GM12878 (cell line): ENCODE measurements at regions of chr2 and their contacts with region 1.

Region 1: DNA sequence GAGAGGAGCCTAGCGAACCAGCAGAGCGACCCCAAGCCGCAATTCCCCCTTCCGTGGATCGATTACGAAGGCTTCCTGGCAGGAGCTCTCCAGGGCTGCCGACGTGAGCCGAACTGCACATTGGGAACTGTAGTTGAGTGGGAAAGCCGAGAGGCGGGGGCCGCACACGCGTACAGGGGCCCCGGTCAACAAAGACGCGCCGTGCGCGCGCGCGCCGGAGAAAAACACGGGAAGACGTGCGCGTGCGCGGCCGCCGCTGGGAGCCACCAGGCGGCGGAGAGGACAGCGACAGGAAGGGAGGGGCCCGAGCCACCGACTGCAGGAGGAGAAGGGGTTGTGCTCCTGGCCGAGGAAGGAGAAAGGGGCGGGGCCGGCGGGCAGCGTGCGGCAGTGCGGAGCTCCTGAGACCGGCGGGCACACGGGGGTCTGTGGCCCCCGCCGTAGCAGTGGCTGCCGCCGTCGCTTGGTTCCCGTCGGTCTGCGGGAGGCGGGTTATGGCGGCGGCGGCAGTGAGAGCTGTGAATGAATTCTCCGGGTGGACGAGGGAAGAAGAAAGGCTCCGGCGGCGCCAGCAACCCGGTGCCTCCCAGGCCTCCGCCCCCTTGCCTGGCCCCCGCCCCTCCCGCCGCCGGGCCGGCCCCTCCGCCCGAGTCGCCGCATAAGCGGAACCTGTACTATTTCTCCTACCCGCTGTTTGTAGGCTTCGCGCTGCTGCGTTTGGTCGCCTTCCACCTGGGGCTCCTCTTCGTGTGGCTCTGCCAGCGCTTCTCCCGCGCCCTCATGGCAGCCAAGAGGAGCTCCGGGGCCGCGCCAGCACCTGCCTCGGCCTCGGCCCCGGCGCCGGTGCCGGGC is at the start of gene SPAST:
- DNase-seq: peak; percentile 90
- ATAC-seq: peak; percentile 97
- H3K4me3 ChIP-seq: peak within 1 kb of the TSS; percentile 87
- H3K27ac ChIP-seq: peak within 1 kb of the TSS; percentile 87
- H3K4me1 ChIP-seq: peaks cover 11% of the 10 kb centered on the region; the same call in 1 of the 2 replicates
- H3K27me3 ChIP-seq: no peaks in the 10 kb centered on the region
- CTCF ChIP-seq: peak; percentile 31 to 48 (median 37); a peak in 5 of 6 replicates
- EP300 ChIP-seq: no peak
- POLR2A ChIP-seq: peak; percentile 78
- RAD21 ChIP-seq: peak; percentile 5; the same call in 1 of the 2 replicates
- polyA plus RNA-seq, gene SPAST: 4.3 to 8.4 TPM

Region 2: DNA sequence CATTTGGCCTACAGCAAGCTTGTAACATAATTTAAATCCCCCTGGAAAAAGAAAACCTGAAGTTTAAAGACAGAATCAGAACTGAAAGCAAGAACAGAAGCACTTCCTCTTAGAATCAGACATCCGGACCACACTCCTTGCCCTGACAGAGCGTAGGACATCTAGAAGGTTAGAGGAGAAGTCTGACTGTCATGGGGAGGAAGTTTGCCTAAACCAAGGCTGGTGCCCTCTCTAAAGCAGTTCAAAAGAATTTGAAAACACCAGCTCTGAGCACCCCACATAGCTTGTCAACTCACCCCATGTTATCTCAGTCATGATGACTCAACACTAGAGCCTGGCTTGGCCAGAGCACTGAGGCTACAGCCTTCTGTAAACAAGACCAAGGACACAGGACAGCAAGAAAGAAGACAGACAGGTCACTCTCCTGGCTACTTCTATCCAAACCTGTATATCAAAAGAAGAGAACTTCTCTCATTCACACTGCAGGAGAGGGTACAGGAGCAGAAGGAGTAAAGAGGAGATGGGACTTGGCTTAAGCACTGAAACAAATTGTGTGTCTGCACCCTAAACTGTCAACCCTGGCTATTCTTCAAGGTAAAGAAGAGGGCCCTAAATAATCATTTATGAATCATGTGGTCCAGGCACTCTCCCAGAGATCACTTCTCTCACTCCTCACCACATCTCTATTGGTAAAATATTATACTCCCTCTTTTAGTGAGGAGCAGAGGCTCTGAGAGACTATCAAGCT is 251.3 kb before region 1 on chr2:
- CTCF ChIA-PET with region 1: no interaction called
- POLR2A ChIA-PET with region 1: no interaction called
- RAD21 ChIA-PET with region 1: no interaction called
- SMC1A ChIA-PET with region 1: no interaction called
- in situ Hi-C with region 1: no loop called
- intact Hi-C with region 1: no loop called
- DNase-seq: peak; percentile 68
- ATAC-seq: peak; percentile 98
- H3K4me3 ChIP-seq: no peak overlapping the region
- H3K27ac ChIP-seq: peak overlapping the region; percentile 59; the same call in 1 of the 2 replicates
- H3K4me1 ChIP-seq: peaks cover 9% of the 10 kb centered on the region
- H3K27me3 ChIP-seq: no peaks in the 10 kb centered on the region
- CTCF ChIP-seq: no peak
- EP300 ChIP-seq: no peak
- POLR2A ChIP-seq: no peak
- RAD21 ChIP-seq: no peak

Region 3: GRCh38 chr2:31957354-31958139 is 106.0 kb before region 1 on chr2:
- CTCF ChIA-PET with region 1: no interaction called
- POLR2A ChIA-PET with region 1: interaction called, 3 read pairs
- RAD21 ChIA-PET with region 1: no interaction called
- SMC1A ChIA-PET with region 1: no interaction called
- in situ Hi-C with region 1: no loop called
- intact Hi-C with region 1: loop called (anchors 5 kb)
- DNase-seq: no peak
- ATAC-seq: peak; percentile 56
- H3K4me3 ChIP-seq: no peak overlapping the region
- H3K27ac ChIP-seq: peak overlapping the region; percentile 59
- H3K4me1 ChIP-seq: peaks cover 32% of the 10 kb centered on the region
- H3K27me3 ChIP-seq: no peaks in the 10 kb centered on the region
- CTCF ChIP-seq: no peak
- EP300 ChIP-seq: no peak
- POLR2A ChIP-seq: no peak
- RAD21 ChIP-seq: no peak

Region 4: GRCh38 chr2:32039447-32040219 is 23.9 kb before region 1 on chr2 and contains the start of gene DPY30:
- CTCF ChIA-PET with region 1: interaction called, 29 read pairs
- POLR2A ChIA-PET with region 1: interaction called, 31 read pairs
- RAD21 ChIA-PET with region 1: interaction called, 39 read pairs
- SMC1A ChIA-PET with region 1: interaction called, 9 read pairs
- in situ Hi-C with region 1: no loop called
- intact Hi-C with region 1: no loop called
- DNase-seq: peak; percentile 62
- ATAC-seq: peak; percentile 98
- H3K4me3 ChIP-seq: peak within 1 kb of the TSS; percentile 97
- H3K27ac ChIP-seq: peak within 1 kb of the TSS; percentile 67
- H3K4me1 ChIP-seq: no peaks in the 10 kb centered on the region
- H3K27me3 ChIP-seq: no peaks in the 10 kb centered on the region
- CTCF ChIP-seq: no peak
- EP300 ChIP-seq: no peak
- POLR2A ChIP-seq: peak; percentile 100
- RAD21 ChIP-seq: no peak
- polyA plus RNA-seq, gene DPY30: 287 to 307 TPM

Region 5: DNA sequence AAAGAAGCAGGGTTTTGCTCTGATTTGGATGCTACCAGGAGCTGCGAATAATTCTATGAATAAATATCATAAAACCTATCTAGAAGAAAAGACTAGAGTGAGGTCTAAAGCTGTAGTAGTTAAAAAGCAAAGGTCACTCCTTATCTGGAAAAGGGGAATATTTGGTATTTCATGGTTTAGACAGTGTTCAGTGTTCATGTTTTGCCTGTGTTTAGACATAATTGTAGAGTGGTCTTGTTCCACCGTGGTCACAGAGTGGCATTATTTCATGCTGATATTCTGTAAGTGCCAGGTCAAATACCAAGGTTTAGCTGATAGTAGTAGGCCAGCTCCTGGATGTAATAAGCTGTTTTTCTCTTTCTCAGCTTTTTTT is 10.6 kb after region 1 on chr2:
- CTCF ChIA-PET with region 1: no interaction called
- POLR2A ChIA-PET with region 1: interaction called, 3 read pairs
- RAD21 ChIA-PET with region 1: interaction called, 10 read pairs
- SMC1A ChIA-PET with region 1: interaction called, 3 read pairs
- in situ Hi-C with region 1: no loop called
- intact Hi-C with region 1: no loop called
- DNase-seq: no peak
- ATAC-seq: no peak
- H3K4me3 ChIP-seq: no peak overlapping the region
- H3K27ac ChIP-seq: no peak overlapping the region
- H3K4me1 ChIP-seq: no peaks in the 10 kb centered on the region
- H3K27me3 ChIP-seq: no peaks in the 10 kb centered on the region
- CTCF ChIP-seq: no peak
- EP300 ChIP-seq: no peak
- POLR2A ChIP-seq: no peak
- RAD21 ChIP-seq: no peak